ENCODE measurements at regions of chr17 and their contacts with region 1.

Region 1: GRCh38 chr17:40443583-40444327 is 505 bp downstream of the IGFBP4 start:
- DNase-seq: peak; percentile 90
- ATAC-seq: peak; percentile 50

Region 2: GRCh38 chr17:40479533-40480480 is 36.1 kb after region 1 on chr17:
- intact Hi-C with region 1: loop called (anchors 2 kb)
- DNase-seq: no peak
- ATAC-seq: no peak

Region 3: GRCh38 chr17:40536295-40537171 is 92.8 kb after region 1 on chr17:
- intact Hi-C with region 1: loop called (anchors 5 kb)
- DNase-seq: peak; percentile 69
- ATAC-seq: no peak

Region 4: DNA sequence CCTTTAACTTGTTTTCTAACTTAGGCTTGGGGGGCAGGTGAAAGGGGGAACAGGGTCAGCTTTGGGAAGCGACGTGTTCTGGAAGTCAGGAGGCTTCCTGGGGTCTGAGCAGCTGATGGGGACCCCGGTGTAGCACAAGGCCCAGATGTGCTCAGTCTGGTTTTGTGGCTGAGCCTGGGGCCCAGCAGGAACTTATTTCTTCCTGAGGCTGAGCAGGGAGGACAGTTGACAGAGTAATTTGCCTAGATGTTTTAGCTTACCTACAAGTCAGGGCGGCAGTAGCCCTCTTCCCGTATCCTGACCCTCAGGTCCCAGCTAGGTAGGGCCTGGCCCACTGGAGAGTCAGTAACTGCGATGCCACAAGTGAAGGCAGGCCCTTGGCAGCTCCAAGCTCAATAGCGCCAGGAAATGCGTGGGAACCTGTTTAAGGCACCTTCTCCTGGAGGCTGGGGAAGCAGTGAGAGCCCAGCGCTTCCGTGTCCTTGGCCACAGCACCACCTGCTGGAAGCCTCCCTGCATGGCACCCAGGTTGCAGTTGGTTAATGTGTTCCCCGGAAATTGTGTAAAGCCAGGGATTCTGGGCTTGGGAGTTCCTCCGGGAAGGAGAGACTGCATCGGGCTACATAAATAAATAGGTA is 116.3 kb after region 1 on chr17:
- intact Hi-C with region 1: loop called (anchors 2 kb)
- DNase-seq: peak; percentile 91
- ATAC-seq: peak; percentile 89